Mammary epithelial cell (primary cell): ENCODE measurements at regions of chr12 and their contacts with region 1.

Region 1: DNA sequence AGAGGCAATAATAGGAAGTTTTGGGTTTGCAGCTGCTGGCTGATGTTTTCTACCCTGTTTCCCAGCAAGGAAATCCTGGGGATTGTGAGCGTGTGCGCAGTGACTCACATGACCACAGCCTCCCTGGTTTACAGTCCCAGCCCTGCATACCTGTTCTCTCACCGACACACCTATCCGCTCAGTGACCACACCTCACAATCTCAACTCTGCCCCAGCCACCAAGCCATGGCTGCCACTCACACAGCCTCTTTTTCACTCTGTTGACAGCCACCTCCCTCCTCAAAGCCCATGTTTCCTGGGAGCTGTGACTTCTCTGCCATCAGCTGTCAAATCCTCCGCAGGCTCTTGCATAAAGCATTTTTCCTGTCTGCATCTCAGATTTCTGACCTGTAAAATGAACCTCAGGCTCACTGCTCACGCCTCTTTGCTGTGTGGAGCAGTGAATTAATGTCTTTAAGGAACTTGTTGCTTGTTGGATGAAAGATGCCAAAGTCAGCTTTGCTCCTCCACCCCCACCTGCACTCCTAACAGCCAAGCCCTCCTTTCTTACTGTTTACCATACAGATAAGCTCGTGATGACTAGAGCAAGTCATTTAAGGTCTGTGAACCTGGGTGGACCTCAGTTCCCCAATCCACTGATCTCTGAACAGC is 43.5 kb downstream of the B4GALNT3 start:
- DNase-seq: peak; percentile 94
- H3K4me3 ChIP-seq: no peak overlapping the region
- H3K27ac ChIP-seq: peak overlapping the region; percentile 58
- H3K4me1 ChIP-seq: peaks cover 12% of the 10 kb centered on the region
- H3K27me3 ChIP-seq: no peaks in the 10 kb centered on the region
- CTCF ChIP-seq: no peak

Region 2: GRCh38 chr12:356276-356988 is 146.8 kb before region 1 on chr12:
- CTCF ChIA-PET with region 1: no interaction called
- dilution Hi-C with region 1: no loop called
- in situ Hi-C with region 1: no loop called
- intact Hi-C with region 1: no loop called
- DNase-seq: peak; percentile 36
- H3K4me3 ChIP-seq: no peak overlapping the region
- H3K27ac ChIP-seq: no peak overlapping the region
- H3K4me1 ChIP-seq: no peaks in the 10 kb centered on the region
- H3K27me3 ChIP-seq: no peaks in the 10 kb centered on the region
- CTCF ChIP-seq: no peak

Region 3: DNA sequence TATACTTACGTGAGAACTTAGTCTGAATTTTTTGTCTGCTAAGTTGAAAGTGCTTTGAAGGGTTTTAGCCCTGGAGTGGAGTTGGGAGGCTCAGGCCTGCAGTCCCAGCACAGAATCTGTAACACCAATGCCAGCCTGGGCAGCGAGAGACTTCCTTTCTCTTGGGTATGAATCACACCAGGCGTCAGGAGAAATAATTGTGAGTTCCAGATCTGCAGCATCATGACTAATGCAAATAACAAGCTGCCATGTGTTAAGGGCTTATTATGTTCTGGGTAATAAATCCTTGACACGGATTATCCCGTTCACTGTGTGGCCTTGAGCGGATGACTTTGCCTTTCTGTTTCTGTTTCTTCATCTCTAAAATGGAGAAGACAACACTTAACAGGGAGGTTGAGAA is 27.1 kb after region 1 on chr12:
- CTCF ChIA-PET with region 1: no interaction called
- dilution Hi-C with region 1: no loop called
- in situ Hi-C with region 1: loop called in 1 of 2 experiments (anchors 5 kb)
- intact Hi-C with region 1: loop called (anchors 2 kb)
- DNase-seq: peak; percentile 87
- H3K4me3 ChIP-seq: no peak overlapping the region
- H3K27ac ChIP-seq: no peak overlapping the region
- H3K4me1 ChIP-seq: peaks cover 21% of the 10 kb centered on the region
- H3K27me3 ChIP-seq: no peaks in the 10 kb centered on the region
- CTCF ChIP-seq: no peak

Region 4: GRCh38 chr12:538731-539539 is 35.7 kb after region 1 on chr12:
- CTCF ChIA-PET with region 1: no interaction called
- dilution Hi-C with region 1: no loop called
- in situ Hi-C with region 1: loop called in 1 of 2 experiments (anchors 5 kb)
- intact Hi-C with region 1: no loop called
- DNase-seq: peak; percentile 75
- H3K4me3 ChIP-seq: no peak overlapping the region
- H3K27ac ChIP-seq: no peak overlapping the region
- H3K4me1 ChIP-seq: peaks cover 11% of the 10 kb centered on the region
- H3K27me3 ChIP-seq: no peaks in the 10 kb centered on the region
- CTCF ChIP-seq: no peak

Region 5: GRCh38 chr12:645563-646071 is 142.4 kb after region 1 on chr12:
- CTCF ChIA-PET with region 1: no interaction called
- dilution Hi-C with region 1: no loop called
- in situ Hi-C with region 1: no loop called
- intact Hi-C with region 1: no loop called
- DNase-seq: peak; percentile 17
- H3K4me3 ChIP-seq: no peak overlapping the region
- H3K27ac ChIP-seq: no peak overlapping the region
- H3K4me1 ChIP-seq: peaks cover 7% of the 10 kb centered on the region
- H3K27me3 ChIP-seq: no peaks in the 10 kb centered on the region
- CTCF ChIP-seq: no peak

Region 6: GRCh38 chr12:1605129-1606020 is 1102.1 kb after region 1 on chr12:
- CTCF ChIA-PET with region 1: no interaction called
- dilution Hi-C with region 1: no loop called
- in situ Hi-C with region 1: no loop called
- intact Hi-C with region 1: loop called (anchors 1 kb)
- DNase-seq: peak; percentile 77
- H3K4me3 ChIP-seq: peak overlapping the region; percentile 30 to 47 (median 41)
- H3K27ac ChIP-seq: peak overlapping the region; percentile 61
- H3K4me1 ChIP-seq: peaks cover 23% of the 10 kb centered on the region
- H3K27me3 ChIP-seq: no peaks in the 10 kb centered on the region
- CTCF ChIP-seq: peak; percentile 70 to 80